Adrenal gland (tissue), 19 donors: ENCODE measurements at regions of chr12 and their contacts with region 1.

Region 1: DNA sequence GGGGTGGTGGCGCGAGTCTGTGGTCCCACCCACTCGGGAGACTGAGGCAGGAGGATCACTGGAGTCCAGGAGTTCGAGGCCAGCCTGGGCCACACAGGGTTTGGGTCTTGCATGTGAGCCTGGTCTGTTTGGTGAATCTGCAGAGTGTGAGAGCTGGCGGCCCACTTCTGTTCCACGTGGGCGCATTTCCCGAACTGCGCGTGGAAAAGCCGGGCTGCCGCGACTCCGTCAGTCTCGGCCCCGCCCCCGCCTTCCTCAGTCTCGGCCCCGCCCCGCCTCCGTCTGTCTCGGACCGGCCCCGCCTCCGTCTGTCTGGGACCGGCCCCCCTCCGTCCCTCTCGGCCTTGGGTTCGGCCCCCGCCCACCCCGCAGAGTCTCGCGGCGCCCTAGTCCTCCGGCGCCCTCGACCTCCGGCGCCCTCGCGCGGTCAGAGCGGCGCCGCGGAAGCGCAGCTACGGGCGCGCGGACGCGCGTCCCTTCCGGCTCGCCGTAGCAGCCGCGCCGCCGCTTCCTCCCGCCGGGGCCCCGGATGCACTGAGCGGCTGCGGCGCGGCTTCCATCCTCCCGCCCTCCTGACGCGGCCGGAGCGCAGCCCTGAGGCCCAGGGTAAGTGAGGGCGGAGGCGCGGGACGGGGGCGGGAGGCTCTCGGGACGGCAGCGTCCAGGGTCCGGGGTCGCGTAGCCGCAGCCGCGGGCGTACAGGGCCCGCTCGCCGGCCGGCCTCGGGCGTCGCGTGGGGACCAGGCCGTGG is at the start of gene EP400:
- DNase-seq: peak; percentile 96 to 99 (median 97)
- H3K4me3 ChIP-seq: peak within 1 kb of the TSS; percentile 19 to 93 (median 87)
- H3K27ac ChIP-seq: peak within 1 kb of the TSS; percentile 71 to 89 (median 81)
- H3K4me1 ChIP-seq: peaks cover 12 to 32% of the 10 kb centered on the region in 2 donors
- H3K27me3 ChIP-seq: no peaks in the 10 kb centered on the region
- CTCF ChIP-seq: peak in 3 of 6 experiments; percentile 48 to 73 (median 64)
- POLR2A ChIP-seq: peak; percentile 59 to 73
- total RNA-seq, gene EP400: 11.5 to 42.4 (median 29.0) TPM

Region 2: GRCh38 chr12:131673888-131674257 is 275.7 kb before region 1 on chr12:
- intact Hi-C with region 1: no loop called
- DNase-seq: peak in 1 of 7 donors; percentile 28
- H3K4me3 ChIP-seq: no peak overlapping the region
- H3K27ac ChIP-seq: no peak overlapping the region
- H3K4me1 ChIP-seq: no peaks in the 10 kb centered on the region
- H3K27me3 ChIP-seq: no peaks in the 10 kb centered on the region
- CTCF ChIP-seq: no peak
- POLR2A ChIP-seq: no peak

Region 3: GRCh38 chr12:131850856-131851559 is 98.6 kb before region 1 on chr12:
- intact Hi-C with region 1: loop called in 1 of 2 experiments (anchors 10 kb)
- DNase-seq: peak in 6 of 7 donors; percentile 59 to 77 (median 68)
- H3K4me3 ChIP-seq: no peak overlapping the region
- H3K27ac ChIP-seq: no peak overlapping the region
- H3K4me1 ChIP-seq: peaks cover 0 to 7% of the 10 kb centered on the region in 2 donors
- H3K27me3 ChIP-seq: no peaks in the 10 kb centered on the region
- CTCF ChIP-seq: peak; percentile 61 to 94 (median 84)
- POLR2A ChIP-seq: no peak

Region 4: GRCh38 chr12:131901431-131902331 is 47.9 kb before region 1 on chr12:
- intact Hi-C with region 1: loop called in 1 of 2 experiments (anchors 5 kb)
- DNase-seq: peak in 5 of 7 donors; percentile 42 to 65 (median 57)
- H3K4me3 ChIP-seq: no peak overlapping the region
- H3K27ac ChIP-seq: peak overlapping the region in 1 of 5 donors; percentile 52
- H3K4me1 ChIP-seq: peaks cover 10 to 52% of the 10 kb centered on the region in 2 donors
- H3K27me3 ChIP-seq: no peaks in the 10 kb centered on the region
- CTCF ChIP-seq: no peak
- POLR2A ChIP-seq: no peak

Region 5: GRCh38 chr12:131980260-131980659 is 30.7 kb after region 1 on chr12:
- intact Hi-C with region 1: no loop called
- DNase-seq: no peak
- H3K4me3 ChIP-seq: no peak overlapping the region
- H3K27ac ChIP-seq: no peak overlapping the region
- H3K4me1 ChIP-seq: peaks cover 0 to 4% of the 10 kb centered on the region in 2 donors
- H3K27me3 ChIP-seq: no peaks in the 10 kb centered on the region
- CTCF ChIP-seq: peak in 1 of 6 experiments; percentile 26
- POLR2A ChIP-seq: no peak

Region 6: GRCh38 chr12:132056320-132056719 is 106.7 kb after region 1 on chr12:
- intact Hi-C with region 1: no loop called
- DNase-seq: no peak
- H3K4me3 ChIP-seq: no peak overlapping the region
- H3K27ac ChIP-seq: no peak overlapping the region
- H3K4me1 ChIP-seq: no peaks in the 10 kb centered on the region
- H3K27me3 ChIP-seq: no peaks in the 10 kb centered on the region
- CTCF ChIP-seq: no peak
- POLR2A ChIP-seq: no peak